ENCODE measurements at regions of chrX and their contacts with region 1.

Region 1: DNA sequence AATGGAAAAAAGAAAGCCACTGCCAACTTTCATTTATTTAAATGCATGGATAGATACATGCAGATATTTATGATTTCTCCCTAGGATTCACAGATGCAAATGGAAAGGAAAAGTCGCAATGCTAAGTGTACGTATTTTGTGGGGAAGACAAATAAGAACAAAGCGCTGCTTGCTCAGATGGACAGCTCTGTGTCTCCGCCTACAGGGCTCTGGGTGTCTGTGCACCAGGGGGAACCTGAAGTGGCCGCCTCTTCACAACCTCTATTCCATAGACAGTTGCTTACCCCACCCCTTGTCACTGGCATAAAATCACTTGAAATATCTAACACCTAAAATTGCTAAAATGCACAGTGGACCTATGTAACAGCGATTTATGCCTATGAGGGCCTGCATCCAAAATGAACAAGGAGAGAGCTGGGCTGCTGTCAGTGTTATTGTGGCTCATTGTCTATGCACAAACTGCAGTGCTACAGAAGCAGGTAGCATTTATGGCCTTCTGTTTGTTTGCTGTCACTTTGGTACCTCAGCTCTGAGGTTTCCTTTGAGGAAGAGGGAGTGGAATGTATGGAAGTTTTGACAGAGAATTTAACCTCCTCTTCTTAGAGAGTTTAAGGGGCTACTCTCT is 58.6 kb upstream of the PAGE1 start:
- DNase-seq: peak; percentile 3
- H3K4me3 ChIP-seq: no peak overlapping the region
- H3K27ac ChIP-seq: no peak overlapping the region
- H3K4me1 ChIP-seq: no peaks in the 10 kb centered on the region
- H3K27me3 ChIP-seq: peaks cover 2% of the 10 kb centered on the region
- CTCF ChIP-seq: peak; percentile 71 to 79

Region 2: GRCh38 chrX:49291615-49292337 is 462.6 kb before region 1 on chrX:
- CTCF ChIA-PET with region 1: interaction called, 8 read pairs
- dilution Hi-C with region 1: no loop called
- in situ Hi-C with region 1: no loop called
- intact Hi-C with region 1: loop called (anchors 1 kb)
- DNase-seq: peak; percentile 20
- H3K4me3 ChIP-seq: no peak overlapping the region
- H3K27ac ChIP-seq: no peak overlapping the region
- H3K4me1 ChIP-seq: no peaks in the 10 kb centered on the region
- H3K27me3 ChIP-seq: no peaks in the 10 kb centered on the region
- CTCF ChIP-seq: peak; percentile 45 to 65

Measured in mammary epithelial cell (primary cell).